ENCODE measurements at regions of chr17 and their contacts with region 1.

Region 1: DNA sequence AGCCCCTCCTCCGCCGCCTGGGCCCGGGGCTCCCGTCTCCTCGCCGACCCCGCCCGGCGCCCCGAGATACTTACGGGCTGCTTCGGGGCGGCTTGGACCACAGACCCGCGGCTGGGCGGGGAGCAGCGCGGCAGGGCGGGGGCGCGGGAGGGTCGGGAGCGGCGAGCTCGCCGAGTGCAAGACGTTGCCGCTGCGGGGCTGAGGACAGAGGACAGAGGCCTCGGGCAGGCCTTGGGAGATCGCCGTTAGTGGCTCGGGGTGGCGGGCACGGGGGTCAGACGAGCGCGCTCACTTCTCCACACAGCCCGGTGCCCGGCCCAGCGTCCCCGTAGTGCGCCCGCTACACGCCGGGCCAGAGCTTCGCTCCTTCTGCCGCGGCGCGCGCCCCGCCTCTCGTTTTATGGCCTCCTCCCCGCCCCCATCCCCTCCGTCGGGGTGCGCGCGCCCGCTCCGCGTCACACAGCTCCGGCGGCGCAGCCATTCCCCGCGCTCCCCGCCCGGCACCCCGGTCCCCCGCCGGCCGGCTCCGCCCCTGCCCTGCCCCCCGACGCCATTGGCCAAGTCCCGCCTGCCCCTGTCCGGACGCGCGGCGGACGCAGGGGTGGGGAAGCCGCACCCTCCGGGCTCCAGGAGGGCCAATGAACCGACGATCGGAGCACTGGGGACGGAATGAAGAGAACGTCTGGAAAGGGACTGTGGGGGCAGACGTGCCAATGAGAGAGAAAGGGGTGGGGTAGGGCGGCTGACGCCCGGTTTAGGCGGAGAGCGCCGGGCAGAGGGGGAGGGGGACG is at the start of gene TOB1:
- DNase-seq: peak; percentile 96
- ATAC-seq: peak; percentile 81
- H3K4me3 Mint-ChIP-seq: peak within 1 kb of the TSS; percentile 88
- H3K27ac Mint-ChIP-seq: peak within 1 kb of the TSS; percentile 93
- H3K4me1 Mint-ChIP-seq: peaks cover 43% of the 10 kb centered on the region
- H3K27me3 Mint-ChIP-seq: no peaks in the 10 kb centered on the region
- CTCF ChIP-seq: no peak
- total RNA-seq, gene TOB1: 34.4 to 40.5 TPM

Region 2: DNA sequence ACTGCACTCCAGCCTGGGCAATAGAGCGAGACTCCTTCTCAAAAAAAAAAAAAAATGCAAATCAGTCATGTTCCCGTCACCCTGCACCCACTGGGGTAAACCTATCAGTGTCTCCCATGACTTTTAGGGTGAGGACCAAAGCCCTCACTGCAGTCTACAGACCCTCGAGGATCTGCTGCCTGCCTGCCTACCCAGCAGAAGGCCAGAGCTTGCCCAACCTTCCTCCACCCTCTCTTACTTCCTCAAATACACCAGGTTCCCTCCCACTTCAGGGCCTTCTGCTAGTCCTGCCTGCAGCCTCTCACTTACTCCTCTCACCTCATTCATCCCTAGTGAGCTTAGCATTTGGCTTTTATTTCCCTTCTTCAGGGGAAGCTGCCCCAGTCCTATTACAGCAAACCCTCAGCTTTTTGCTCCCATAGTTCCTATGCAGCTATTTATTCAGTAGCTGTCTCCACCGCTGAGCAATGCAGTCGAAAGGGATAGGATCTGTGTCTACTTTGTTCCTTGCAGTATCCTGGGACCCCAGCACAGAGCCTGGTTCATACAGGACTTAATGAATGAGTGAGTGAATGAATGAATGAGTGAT is 17.8 kb after region 1 on chr17:
- CTCF ChIA-PET with region 1: interaction called, 3 read pairs
- POLR2A ChIA-PET with region 1: interaction called, 15 read pairs
- intact Hi-C with region 1: no loop called
- DNase-seq: no peak
- ATAC-seq: no peak
- H3K4me3 Mint-ChIP-seq: no peak overlapping the region
- H3K27ac Mint-ChIP-seq: no peak overlapping the region
- H3K4me1 Mint-ChIP-seq: peaks cover 15% of the 10 kb centered on the region
- H3K27me3 Mint-ChIP-seq: no peaks in the 10 kb centered on the region
- CTCF ChIP-seq: no peak

Region 3: DNA sequence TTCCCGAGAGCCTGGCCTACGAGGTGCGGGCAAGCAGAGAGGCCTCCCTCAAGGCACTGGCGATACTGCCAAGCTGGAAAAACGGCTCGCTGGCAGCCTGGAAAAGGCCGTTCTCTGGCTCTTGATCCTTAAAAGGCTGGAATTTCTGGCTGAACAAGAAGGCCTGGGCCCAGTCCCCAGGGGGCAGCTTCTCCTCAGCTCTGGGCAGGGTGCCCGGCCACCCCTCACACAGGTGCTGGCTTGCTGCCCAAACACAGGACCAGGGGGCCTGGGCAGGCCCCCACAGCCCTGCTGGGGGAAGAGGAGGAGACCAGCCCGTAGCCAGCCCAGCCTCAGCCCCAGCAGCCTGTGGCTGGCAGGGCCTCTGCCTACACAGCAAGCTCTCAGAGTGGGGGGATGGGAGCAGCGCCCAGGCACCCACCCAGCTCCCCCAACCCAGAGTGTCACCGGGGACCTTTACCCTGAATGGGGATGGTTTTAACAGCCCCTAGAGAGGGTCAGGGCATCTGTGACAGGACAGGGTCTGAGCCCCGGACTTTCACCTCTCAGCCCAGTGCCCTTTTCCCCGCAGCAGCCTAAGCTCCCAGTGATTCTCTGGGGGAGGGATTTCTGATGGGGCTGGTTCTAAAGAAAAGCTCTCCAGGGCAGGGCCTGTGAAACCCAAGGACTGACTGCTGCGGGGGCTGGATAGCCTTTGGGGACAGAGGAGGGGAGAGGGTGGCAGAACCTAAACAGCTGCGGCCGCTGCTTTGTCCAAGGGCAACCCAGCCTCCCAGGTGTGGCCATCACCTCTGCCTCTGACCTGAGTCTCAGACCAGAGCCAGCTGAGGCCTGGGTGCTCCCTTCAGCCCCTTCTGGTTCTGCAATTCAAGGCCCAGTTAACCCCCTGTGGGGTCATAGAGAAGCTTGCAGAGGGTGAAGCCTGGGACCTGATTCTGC is 38.6 kb after region 1 on chr17:
- CTCF ChIA-PET with region 1: interaction called, 10 read pairs
- POLR2A ChIA-PET with region 1: interaction called, 135 read pairs
- intact Hi-C with region 1: no loop called
- DNase-seq: no peak
- ATAC-seq: peak; percentile 25
- H3K4me3 Mint-ChIP-seq: no peak overlapping the region
- H3K27ac Mint-ChIP-seq: peak overlapping the region; percentile 93
- H3K4me1 Mint-ChIP-seq: peaks cover 56% of the 10 kb centered on the region
- H3K27me3 Mint-ChIP-seq: no peaks in the 10 kb centered on the region
- CTCF ChIP-seq: no peak

Region 4: DNA sequence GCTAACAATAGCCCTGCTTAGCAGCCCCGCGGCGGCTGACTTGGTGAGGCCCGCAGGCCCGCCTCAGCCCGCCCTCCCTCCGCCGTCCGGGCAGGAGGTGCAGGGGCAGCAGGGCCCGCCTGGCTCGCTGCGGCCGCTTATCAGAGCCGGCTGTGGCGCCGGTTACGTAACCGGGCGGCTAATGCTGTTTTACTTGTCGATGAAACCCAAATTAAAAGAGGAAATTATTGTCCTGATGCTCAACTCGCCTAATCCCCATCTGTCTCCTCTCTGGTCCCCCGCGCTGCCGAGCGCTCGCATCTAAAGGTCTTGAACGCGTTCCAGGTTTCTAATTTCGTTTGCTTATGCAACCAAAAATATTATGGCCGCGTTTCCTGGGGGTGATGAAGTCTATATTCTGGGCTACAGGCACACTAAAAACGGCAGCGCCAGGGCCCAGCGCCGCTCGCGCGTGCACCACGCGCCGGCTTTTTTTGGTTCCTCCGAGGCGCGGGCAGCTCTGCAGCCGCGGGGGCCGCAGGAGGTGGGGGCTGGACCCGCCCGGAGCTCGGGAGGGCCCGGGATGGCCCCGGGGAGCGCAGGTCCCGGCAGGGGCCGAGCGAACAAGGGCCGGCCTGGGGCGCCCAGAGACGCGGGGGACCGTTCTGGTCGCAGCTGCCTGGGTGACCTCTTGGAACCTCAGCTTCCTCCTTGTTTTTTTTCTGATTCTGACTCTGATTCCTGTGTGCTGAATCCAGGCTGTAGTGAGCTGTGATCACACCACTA is 65.1 kb after region 1 on chr17:
- CTCF ChIA-PET with region 1: interaction called, 4 read pairs
- POLR2A ChIA-PET with region 1: interaction called, 33 read pairs
- intact Hi-C with region 1: no loop called
- DNase-seq: peak; percentile 65
- ATAC-seq: peak; percentile 77
- H3K4me3 Mint-ChIP-seq: peak overlapping the region; percentile 74
- H3K27ac Mint-ChIP-seq: peak overlapping the region; percentile 82
- H3K4me1 Mint-ChIP-seq: peaks cover 19% of the 10 kb centered on the region
- H3K27me3 Mint-ChIP-seq: no peaks in the 10 kb centered on the region
- CTCF ChIP-seq: no peak

Region 5: GRCh38 chr17:50949989-50950881 is 84.1 kb after region 1 on chr17:
- CTCF ChIA-PET with region 1: interaction called, 79 read pairs
- POLR2A ChIA-PET with region 1: interaction called, 100 read pairs
- intact Hi-C with region 1: no loop called
- DNase-seq: peak; percentile 69
- ATAC-seq: peak; percentile 91
- H3K4me3 Mint-ChIP-seq: no peak overlapping the region
- H3K27ac Mint-ChIP-seq: no peak overlapping the region
- H3K4me1 Mint-ChIP-seq: peaks cover 12% of the 10 kb centered on the region
- H3K27me3 Mint-ChIP-seq: no peaks in the 10 kb centered on the region
- CTCF ChIP-seq: peak; percentile 69

Region 6: GRCh38 chr17:51103451-51103850 is 237.3 kb after region 1 on chr17:
- CTCF ChIA-PET with region 1: no interaction called
- POLR2A ChIA-PET with region 1: no interaction called
- intact Hi-C with region 1: no loop called
- DNase-seq: no peak
- ATAC-seq: no peak
- H3K4me3 Mint-ChIP-seq: no peak overlapping the region
- H3K27ac Mint-ChIP-seq: no peak overlapping the region
- H3K4me1 Mint-ChIP-seq: peaks cover 5% of the 10 kb centered on the region
- H3K27me3 Mint-ChIP-seq: no peaks in the 10 kb centered on the region
- CTCF ChIP-seq: no peak

Region 7: GRCh38 chr17:51153210-51154072 is 287.3 kb after region 1 on chr17 and contains the start of gene NME1:
- CTCF ChIA-PET with region 1: interaction called, 4 read pairs
- POLR2A ChIA-PET with region 1: interaction called, 4 read pairs
- intact Hi-C with region 1: loop called (anchors 10 kb)
- DNase-seq: peak; percentile 98
- ATAC-seq: peak; percentile 92
- H3K4me3 Mint-ChIP-seq: no peak within 1 kb of the TSS
- H3K27ac Mint-ChIP-seq: no peak within 1 kb of the TSS
- H3K4me1 Mint-ChIP-seq: peaks cover 18% of the 10 kb centered on the region
- H3K27me3 Mint-ChIP-seq: no peaks in the 10 kb centered on the region
- CTCF ChIP-seq: peak; percentile 71
- total RNA-seq, gene NME1: 296 to 301 TPM